Heart left ventricle (tissue), 16 donors: ENCODE measurements at regions of chr20 and their contacts with region 1.

Region 1: GRCh38 chr20:49713753-49714712 is at the start of gene B4GALT5:
- DNase-seq: peak; percentile 75 to 88 (median 80)
- ATAC-seq: peak; percentile 65 to 94 (median 86)
- H3K4me3 ChIP-seq: peak within 1 kb of the TSS; percentile 77 to 99 (median 98)
- H3K27ac ChIP-seq: peak within 1 kb of the TSS; percentile 69 to 97 (median 94)
- H3K4me1 ChIP-seq: peaks cover 0 to 46% (median 29%) of the 10 kb centered on the region in 12 donors
- H3K27me3 ChIP-seq: no peaks in the 10 kb centered on the region
- CTCF ChIP-seq: no peak
- POLR2A ChIP-seq: peak in 1 of 2 donors; percentile 41
- total RNA-seq, gene B4GALT5: 17.0 to 60.4 (median 33.5) TPM

Region 2: DNA sequence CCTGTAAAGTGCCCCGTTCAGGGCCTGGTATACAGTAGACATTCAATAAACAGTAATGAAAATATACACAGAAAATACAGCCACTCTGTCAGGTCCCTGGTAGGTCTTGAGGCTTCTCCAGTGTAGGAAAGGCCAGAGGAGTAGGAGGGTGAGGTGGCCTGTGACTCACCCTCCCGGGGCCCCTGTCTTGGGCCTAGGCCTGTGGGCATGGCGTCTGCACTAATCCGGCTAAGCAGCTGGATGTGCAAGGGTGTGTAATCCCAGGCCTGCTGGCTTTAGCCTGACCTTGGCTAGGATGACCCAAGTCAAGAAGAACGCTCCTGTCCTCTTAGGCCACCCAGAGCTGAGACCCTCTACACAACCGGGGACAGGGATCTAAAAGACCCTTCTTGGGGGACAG is 316.5 kb before region 1 on chr20:
- intact Hi-C with region 1: no loop called
- DNase-seq: peak in 1 of 5 donors; percentile 43
- ATAC-seq: peak in 2 of 4 donors; percentile 48 to 63
- H3K4me3 ChIP-seq: no peak overlapping the region
- H3K27ac ChIP-seq: peak overlapping the region in 1 of 12 donors; percentile 87
- H3K4me1 ChIP-seq: peaks cover 0 to 38% (median 17%) of the 10 kb centered on the region in 12 donors
- H3K27me3 ChIP-seq: no peaks in the 10 kb centered on the region
- CTCF ChIP-seq: no peak
- POLR2A ChIP-seq: no peak

Region 3: DNA sequence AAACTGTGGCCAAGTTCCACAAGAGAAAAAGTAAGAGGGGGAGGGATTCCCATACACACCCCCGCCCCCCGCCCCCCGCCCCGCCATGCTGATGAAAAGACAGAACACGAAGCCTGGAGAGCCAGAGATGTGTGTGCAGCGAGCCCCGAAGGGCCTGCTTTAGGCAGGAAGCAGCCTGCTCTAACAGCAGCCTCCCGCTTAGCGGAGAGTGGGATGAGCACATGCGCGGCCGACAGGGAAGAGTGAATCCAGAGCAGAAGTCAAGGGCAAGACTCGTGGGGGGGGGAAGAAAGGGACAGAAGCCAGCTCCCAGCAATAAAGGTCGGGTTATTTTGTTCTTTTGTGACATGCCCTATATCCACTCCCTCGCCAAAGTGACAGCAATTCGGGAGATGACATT is 78.9 kb before region 1 on chr20:
- intact Hi-C with region 1: loop called in 2 of 10 experiments (anchors 5 kb)
- DNase-seq: peak; percentile 41 to 75 (median 64)
- ATAC-seq: peak; percentile 48 to 73 (median 60)
- H3K4me3 ChIP-seq: no peak overlapping the region
- H3K27ac ChIP-seq: peak overlapping the region in 10 of 12 donors; percentile 20 to 71 (median 46)
- H3K4me1 ChIP-seq: peaks cover 0 to 43% (median 4%) of the 10 kb centered on the region in 12 donors
- H3K27me3 ChIP-seq: no peaks in the 10 kb centered on the region
- CTCF ChIP-seq: no peak
- POLR2A ChIP-seq: no peak

Region 4: DNA sequence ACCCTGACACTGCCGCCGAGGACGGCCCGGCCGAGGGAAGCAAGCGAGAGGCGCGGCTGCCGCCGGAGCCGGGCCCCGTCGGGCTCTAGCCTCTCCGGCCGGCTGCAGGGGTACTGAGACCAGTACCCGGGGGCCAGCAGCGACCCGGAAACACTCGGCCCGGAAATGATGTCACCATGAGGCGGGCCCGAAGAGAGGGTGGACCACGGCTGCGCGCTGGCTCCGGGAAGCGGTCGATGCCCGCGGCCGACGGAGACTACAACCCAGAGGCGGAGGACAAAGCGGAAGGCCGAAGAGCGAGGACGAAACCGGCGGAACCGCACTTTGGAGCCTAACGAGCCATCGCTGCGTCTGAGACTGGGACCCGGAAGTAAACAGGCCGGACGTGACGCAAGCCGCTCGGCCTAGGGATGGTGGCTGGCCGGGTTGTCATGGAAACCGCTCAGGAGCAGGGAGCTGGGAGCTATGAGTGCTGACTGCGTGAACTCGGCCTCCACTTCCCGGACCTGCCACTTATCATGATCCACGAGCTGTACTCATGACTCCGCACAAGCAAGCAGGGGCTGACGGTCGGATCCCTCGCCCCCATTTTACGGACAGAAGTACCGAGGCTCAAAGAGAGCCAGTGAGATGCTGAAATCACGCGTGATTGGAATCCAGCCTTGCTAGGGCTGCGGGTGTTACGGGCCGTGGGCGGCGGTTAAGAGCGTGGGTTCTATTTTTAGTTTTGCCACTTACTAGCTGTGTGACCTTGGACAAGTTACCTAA is 201.5 kb after region 1 on chr20 and contains the start of gene SPATA2:
- intact Hi-C with region 1: loop called in 1 of 10 experiments (anchors 10 kb)
- DNase-seq: peak; percentile 96 to 99 (median 97)
- ATAC-seq: peak; percentile 90 to 95 (median 94)
- H3K4me3 ChIP-seq: peak within 1 kb of the TSS; percentile 72 to 99 (median 96)
- H3K27ac ChIP-seq: peak within 1 kb of the TSS; percentile 93 to 100 (median 99)
- H3K4me1 ChIP-seq: peaks cover 9 to 54% (median 37%) of the 10 kb centered on the region in 12 donors
- H3K27me3 ChIP-seq: no peaks in the 10 kb centered on the region
- CTCF ChIP-seq: no peak
- POLR2A ChIP-seq: peak in 1 of 2 donors; percentile 57
- total RNA-seq, gene SPATA2: 5.9 to 9.3 (median 7.8) TPM